MCF 10A (cell line): ENCODE measurements at regions of chr10 and their contacts with region 1.

Region 1: GRCh38 chr10:3740157-3740871 is 44.7 kb downstream of the KLF6 start:
- DNase-seq: peak; percentile 85
- H3K4me3 Mint-ChIP-seq: no peak overlapping the region
- H3K27ac Mint-ChIP-seq: peak overlapping the region; percentile 85
- H3K4me1 Mint-ChIP-seq: peaks cover 15% of the 10 kb centered on the region
- H3K27me3 Mint-ChIP-seq: no peaks in the 10 kb centered on the region
- CTCF ChIP-seq: no peak

Region 2: GRCh38 chr10:3472287-3473051 is 267.8 kb before region 1 on chr10:
- CTCF ChIA-PET with region 1: no interaction called
- POLR2A ChIA-PET with region 1: interaction called, 22 read pairs
- intact Hi-C with region 1: loop called (anchors 2 kb)
- DNase-seq: peak; percentile 67
- H3K4me3 Mint-ChIP-seq: peak overlapping the region; percentile 13
- H3K27ac Mint-ChIP-seq: peak overlapping the region; percentile 74
- H3K4me1 Mint-ChIP-seq: peaks cover 44% of the 10 kb centered on the region
- H3K27me3 Mint-ChIP-seq: no peaks in the 10 kb centered on the region
- CTCF ChIP-seq: no peak

Region 3: DNA sequence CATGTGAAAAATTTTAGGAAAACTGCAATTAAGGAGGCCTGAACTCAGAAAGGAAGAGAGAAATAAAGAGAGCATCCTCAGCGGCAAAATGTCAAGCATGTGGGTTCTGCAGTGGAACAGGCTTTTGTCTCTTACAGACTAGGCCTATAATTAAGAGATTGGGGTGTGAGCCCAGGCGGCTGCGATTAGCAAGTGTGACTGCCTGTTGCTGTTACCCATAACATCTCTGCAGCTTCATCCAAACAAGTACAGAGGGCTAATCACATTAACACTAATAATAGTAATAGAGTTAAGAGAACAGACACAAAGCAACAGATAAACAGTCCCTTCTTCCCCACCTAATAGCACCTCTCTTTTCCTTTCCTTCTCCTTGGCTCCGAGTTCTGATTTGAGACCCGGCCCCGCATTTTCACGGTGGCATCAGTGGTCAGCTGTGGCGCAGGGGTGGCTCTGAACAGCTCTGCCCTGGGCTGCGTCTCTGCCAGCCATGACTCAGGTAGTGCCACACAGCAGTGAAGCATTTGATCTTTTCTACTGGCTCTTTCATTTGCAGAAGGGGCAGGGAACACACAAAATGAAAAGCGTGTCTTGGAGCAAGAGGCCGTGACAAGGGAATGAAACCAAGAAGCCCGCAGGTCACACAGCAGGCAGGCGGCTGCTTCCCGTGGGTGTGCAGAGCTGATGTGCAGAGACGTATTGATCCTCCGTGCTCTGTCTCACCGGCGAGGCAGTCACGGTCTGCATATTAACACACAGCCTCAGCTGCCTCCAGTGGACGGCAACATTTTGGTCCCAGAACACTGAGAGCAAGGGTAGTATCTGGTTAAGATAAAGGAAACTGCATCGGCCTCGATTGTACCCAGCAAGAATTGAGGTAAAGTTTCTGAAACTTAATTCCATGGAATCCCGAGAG is 58.4 kb before region 1 on chr10:
- CTCF ChIA-PET with region 1: no interaction called
- POLR2A ChIA-PET with region 1: no interaction called
- intact Hi-C with region 1: no loop called
- DNase-seq: no peak
- H3K4me3 Mint-ChIP-seq: no peak overlapping the region
- H3K27ac Mint-ChIP-seq: no peak overlapping the region
- H3K4me1 Mint-ChIP-seq: no peaks in the 10 kb centered on the region
- H3K27me3 Mint-ChIP-seq: no peaks in the 10 kb centered on the region
- CTCF ChIP-seq: no peak

Region 4: GRCh38 chr10:3720228-3721019 is 19.9 kb before region 1 on chr10:
- CTCF ChIA-PET with region 1: interaction called, 4 read pairs
- POLR2A ChIA-PET with region 1: interaction called, 12 read pairs
- intact Hi-C with region 1: no loop called
- DNase-seq: peak; percentile 95
- H3K4me3 Mint-ChIP-seq: no peak overlapping the region
- H3K27ac Mint-ChIP-seq: peak overlapping the region; percentile 73
- H3K4me1 Mint-ChIP-seq: peaks cover 11% of the 10 kb centered on the region
- H3K27me3 Mint-ChIP-seq: no peaks in the 10 kb centered on the region
- CTCF ChIP-seq: no peak

Region 5: GRCh38 chr10:3757638-3758490 is 17.6 kb after region 1 on chr10:
- CTCF ChIA-PET with region 1: interaction called, 4 read pairs
- POLR2A ChIA-PET with region 1: interaction called, 53 read pairs
- intact Hi-C with region 1: loop called (anchors 1 kb)
- DNase-seq: peak; percentile 91
- H3K4me3 Mint-ChIP-seq: peak overlapping the region; percentile 48
- H3K27ac Mint-ChIP-seq: peak overlapping the region; percentile 62
- H3K4me1 Mint-ChIP-seq: peaks cover 52% of the 10 kb centered on the region
- H3K27me3 Mint-ChIP-seq: no peaks in the 10 kb centered on the region
- CTCF ChIP-seq: no peak

Region 6: DNA sequence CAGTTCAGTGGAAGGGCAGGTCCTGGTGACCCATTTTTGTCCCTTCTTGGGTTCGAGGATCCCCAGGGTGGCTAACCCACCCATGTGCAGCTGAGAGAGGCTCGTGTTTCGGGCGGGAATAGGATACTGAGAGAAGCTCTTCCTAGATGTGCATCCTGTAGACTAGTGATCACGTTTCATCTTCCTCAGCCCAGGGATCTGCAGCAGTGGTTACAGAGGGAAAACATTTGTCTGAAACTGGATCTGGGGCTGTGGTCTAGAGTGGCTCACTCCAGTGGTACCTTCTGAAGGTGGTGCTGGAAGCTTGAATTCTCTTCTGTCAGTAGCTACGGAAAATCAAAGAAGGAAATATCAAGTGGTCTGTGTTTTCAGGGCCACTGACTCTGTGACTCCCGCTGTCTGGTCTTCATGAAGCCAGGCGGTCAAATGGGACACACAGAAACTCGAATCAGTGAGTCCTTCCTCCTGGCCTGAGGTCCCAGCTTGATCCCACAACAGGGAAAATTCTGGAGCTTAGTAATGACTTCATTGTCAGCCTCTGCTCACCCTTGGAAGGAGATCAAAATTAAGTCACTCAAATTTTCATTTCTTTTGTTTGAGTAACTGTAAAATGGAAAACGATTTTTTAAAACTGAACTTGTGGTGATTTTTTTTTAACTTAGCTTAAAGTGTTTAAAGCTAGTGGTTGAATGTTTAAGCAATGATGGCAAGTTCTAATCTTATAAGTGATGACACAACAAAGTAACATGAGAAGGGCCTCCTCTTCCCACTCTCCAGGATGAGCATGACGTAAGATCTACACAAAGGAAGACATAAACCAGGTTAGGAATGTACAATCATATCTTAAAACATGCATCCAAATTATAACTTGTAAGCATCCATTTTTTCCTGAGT is 514.0 kb after region 1 on chr10:
- CTCF ChIA-PET with region 1: no interaction called
- POLR2A ChIA-PET with region 1: no interaction called
- intact Hi-C with region 1: loop called (anchors 5 kb)
- DNase-seq: peak; percentile 47
- H3K4me3 Mint-ChIP-seq: no peak overlapping the region
- H3K27ac Mint-ChIP-seq: peak overlapping the region; percentile 64
- H3K4me1 Mint-ChIP-seq: peaks cover 20% of the 10 kb centered on the region
- H3K27me3 Mint-ChIP-seq: no peaks in the 10 kb centered on the region
- CTCF ChIP-seq: no peak